Activated CD4-positive, alpha-beta T cell treated with anti-CD3 and anti-CD28 coated beads for 36 hours (primary cell): ENCODE measurements at regions of chr12 and their contacts with region 1.

Region 1: DNA sequence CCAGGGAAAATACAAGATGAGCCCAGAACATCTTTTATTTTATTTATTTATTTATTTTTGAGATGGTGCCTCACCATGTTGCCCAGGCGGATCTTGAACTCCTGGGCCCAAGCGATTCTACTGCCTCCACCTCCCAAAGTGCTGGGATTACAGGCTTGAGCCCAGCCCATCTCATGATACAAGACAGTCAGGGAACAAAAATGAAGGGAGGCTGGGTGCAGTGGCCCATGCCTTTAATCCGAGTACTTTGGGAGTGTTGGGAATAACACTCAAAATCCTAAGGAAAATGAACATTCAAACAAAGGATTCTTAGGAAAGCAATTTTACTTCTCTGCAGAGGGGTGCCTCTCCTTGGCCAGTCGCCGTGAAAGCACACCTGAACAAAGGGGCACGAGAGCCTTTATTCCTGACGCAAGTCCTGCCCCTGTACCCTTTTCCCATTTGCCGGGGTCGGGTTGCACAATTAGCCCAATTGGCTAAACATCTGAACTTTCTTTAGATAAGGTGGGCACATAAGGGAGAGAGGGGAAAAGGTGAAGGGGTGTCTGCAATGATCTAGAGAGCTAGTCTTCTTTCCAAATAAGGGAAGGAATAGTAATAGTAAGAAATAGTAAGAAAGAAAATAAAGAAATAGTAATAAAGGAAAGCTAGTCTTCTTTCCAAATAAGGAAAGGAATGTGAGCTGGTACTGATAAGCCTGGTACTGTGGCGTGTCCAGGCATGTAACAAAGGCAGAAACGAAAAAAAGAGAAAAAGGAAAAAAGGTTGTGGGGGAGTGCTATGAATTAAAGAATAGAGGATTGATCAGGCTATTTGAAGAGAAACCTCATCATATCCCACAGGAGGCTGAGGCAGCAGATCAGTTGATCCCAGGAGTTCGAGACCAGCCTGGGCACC is 13.4 kb downstream of the NCAPD2 start:
- DNase-seq: no peak
- ATAC-seq: no peak
- H3K4me3 Mint-ChIP-seq: no peak overlapping the region
- H3K27ac Mint-ChIP-seq: no peak overlapping the region
- H3K4me1 Mint-ChIP-seq: no peaks in the 10 kb centered on the region
- H3K27me3 Mint-ChIP-seq: no peaks in the 10 kb centered on the region

Region 2: DNA sequence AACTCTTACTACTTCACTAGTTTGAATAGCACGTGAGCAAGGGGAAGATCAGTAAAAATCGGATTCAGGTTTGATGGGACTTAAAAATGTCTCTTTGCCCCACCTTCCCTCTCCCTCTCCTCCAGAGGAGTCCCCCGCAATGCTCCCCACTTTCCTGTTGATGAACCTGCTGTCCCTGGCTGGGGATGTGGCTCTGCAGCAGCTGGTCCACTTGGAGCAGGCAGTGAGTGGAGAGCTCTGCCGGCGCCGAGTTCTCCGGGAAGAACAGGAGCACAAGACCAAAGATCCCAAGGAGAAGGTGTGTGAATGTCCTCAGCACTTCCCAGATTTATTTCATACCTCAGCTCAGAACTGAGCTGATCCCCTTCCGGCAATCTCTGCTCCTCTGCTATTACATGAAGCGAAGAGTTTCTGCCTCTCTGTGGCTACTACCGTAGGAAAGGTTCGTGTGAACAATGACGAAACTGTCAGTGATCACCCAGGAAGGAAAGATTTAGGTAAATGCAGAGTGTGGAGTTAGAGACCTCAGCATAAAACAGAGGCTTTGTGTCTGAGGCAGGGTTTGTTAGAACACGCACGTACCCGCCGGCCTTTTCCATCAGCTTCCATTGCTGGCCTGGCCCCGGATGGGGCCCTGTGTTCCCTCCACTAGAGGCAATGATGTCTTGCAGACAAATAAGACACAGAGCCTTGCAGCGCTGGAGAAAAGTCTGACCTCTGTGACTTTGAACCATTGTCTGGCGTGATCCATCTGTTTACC is 19.6 kb after region 1 on chr12:
- CTCF ChIA-PET with region 1: interaction called, 5 read pairs
- POLR2A ChIA-PET with region 1: no interaction called
- intact Hi-C with region 1: loop called in 1 of 2 experiments (anchors 2 kb)
- DNase-seq: no peak
- ATAC-seq: no peak
- H3K4me3 Mint-ChIP-seq: no peak overlapping the region
- H3K27ac Mint-ChIP-seq: no peak overlapping the region
- H3K4me1 Mint-ChIP-seq: peaks cover 8% of the 10 kb centered on the region
- H3K27me3 Mint-ChIP-seq: no peaks in the 10 kb centered on the region